Left ventricle myocardium inferior (tissue), 1 donor: ENCODE measurements at regions of chr11 and their contacts with region 1.

Region 1: GRCh38 chr11:8688414-8689362 is 6.1 kb downstream of the RPL27A start:
- DNase-seq: peak; percentile 93
- H3K4me3 ChIP-seq: peak overlapping the region; percentile 76
- H3K27ac ChIP-seq: peak overlapping the region; percentile 93
- H3K4me1 ChIP-seq: peaks cover 38% of the 10 kb centered on the region
- H3K27me3 ChIP-seq: no peaks in the 10 kb centered on the region
- CTCF ChIP-seq: peak; percentile 35

Region 2: DNA sequence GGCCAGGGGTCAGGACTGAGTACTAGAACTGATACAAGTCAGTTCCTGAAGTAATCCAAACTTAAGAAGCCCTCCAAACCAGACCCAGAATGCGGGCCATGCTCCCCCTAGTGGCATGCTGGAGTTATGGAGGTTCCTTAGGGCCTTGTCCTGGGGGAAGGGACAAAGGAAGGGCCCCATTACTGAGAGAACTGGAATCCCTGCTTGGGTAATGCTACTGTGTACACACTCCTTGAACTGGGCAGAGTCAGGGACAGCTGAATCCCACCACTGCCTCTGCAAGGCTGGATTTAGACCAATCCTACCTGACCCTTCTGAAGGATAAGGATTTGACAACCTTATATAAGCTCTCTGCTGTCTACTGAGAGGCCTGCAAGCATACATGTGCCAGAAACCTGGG is 125.0 kb after region 1 on chr11:
- intact Hi-C with region 1: loop called (anchors 5 kb)
- DNase-seq: peak; percentile 66
- H3K4me3 ChIP-seq: no peak overlapping the region
- H3K27ac ChIP-seq: peak overlapping the region; percentile 57
- H3K4me1 ChIP-seq: peaks cover 53% of the 10 kb centered on the region
- H3K27me3 ChIP-seq: no peaks in the 10 kb centered on the region
- CTCF ChIP-seq: peak; percentile 92

Region 3: DNA sequence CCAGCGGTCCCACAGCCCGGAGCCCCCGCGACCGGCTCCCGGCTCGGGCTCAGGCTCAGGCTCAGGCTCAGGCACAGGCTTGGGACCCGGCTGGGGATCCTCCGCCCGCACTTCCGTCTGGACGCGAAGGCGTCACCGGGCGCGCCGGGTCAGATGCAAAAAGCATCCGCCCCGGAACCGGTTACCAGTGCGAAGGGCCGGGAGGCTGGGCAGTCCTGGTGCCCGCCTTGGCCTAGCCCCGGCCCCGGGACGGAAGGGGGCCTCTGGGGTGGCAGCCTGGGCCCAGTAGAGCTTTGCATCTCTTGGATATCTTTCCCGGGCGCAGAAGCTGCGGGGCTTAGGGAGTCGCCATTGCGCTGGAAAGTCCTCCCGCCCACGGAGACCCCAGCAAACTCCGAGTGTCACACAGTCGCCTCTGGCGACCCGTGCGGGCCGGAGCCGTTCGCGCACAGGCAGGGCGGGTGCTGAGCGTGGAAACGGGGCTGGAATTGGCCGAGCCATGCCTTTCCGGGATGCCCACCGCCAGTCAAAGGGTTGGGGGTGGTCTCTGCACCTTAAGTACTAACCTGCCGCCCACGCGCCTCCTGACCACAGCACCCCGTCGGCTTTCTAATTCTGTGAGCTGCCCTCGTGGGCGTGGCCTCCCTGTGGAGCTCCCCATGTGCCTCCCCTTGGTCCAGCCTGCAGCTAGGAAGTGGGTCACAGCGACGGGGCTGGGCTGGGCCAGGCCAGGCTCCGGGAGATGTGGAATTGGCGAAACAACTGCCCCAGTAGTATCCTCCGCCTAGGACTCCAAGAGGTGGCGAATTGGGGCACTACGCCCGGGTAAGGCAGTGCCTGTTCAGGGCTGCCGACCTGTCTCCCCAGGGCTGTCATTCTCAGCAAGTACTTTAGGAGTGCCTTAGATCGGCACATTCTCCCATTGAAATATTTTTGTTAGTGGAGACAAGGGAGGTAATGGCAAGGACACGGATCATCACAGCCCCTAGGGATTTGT is 275.9 kb after region 1 on chr11 and contains the start of gene TMEM9B:
- intact Hi-C with region 1: loop called (anchors 5 kb)
- DNase-seq: peak; percentile 90
- H3K4me3 ChIP-seq: peak within 1 kb of the TSS; percentile 85
- H3K27ac ChIP-seq: peak within 1 kb of the TSS; percentile 97
- H3K4me1 ChIP-seq: peaks cover 49% of the 10 kb centered on the region
- H3K27me3 ChIP-seq: no peaks in the 10 kb centered on the region
- CTCF ChIP-seq: no peak
- total RNA-seq, gene TMEM9B: 51.1 TPM